CD8-positive, alpha-beta T cell (primary cell): ENCODE measurements at regions of chr10 and their contacts with region 1.

Region 1: DNA sequence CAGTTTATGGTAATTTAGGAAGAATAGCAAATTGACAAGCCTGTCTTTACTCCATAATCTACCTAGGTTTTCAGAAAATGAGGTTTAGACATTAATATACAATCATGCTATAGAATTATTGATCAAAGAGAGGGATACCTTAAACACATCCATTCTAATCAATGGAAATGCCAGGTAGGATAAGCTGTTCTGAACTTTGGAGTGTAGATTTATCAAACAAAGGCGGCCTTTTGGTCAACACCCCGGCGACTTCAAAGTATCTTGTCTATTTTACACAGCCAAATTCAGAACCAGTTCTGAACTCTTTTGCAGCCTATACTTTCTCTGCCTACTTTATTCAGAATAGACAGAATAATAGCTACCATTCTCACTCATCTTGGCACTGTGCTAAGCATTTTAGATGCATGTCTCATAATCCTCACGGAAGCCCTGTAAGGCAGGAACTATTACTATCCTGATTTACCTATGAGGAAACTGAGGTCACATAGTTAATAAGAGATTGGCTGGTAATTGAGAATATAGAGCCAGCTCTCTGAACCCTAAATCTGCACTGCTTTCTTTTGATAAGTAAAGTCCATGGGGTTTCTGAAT is 641.9 kb upstream of the LRRTM3 start:
- DNase-seq: no peak
- ATAC-seq: no peak
- H3K4me3 ChIP-seq: no peak overlapping the region
- H3K4me3 Mint-ChIP-seq: no peak overlapping the region
- H3K27ac ChIP-seq: no peak overlapping the region
- H3K27ac Mint-ChIP-seq: no peak overlapping the region
- H3K4me1 ChIP-seq: no peaks in the 10 kb centered on the region
- H3K4me1 Mint-ChIP-seq: no peaks in the 10 kb centered on the region
- H3K27me3 ChIP-seq: no peaks in the 10 kb centered on the region
- H3K27me3 Mint-ChIP-seq: no peaks in the 10 kb centered on the region
- CTCF ChIP-seq: no peak

Region 2: DNA sequence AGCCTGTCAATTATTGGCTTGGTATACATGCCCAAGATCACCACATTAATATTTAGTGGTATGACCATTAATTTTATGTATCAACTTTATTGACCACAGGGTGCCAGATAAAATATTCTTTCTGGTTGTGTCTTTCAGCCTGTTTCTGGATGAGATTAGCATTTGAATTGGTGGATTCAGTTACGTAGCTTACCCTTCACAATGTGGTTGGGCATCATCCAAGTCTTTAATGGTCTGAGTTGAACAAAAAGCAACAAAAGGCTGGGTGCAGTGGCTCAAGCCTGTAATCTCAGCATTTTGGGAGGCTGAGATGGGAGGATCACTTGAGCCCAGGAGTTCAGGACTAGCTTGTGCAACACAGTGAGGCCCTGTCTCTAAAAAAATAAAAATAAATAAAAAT is 60.3 kb before region 1 on chr10:
- CTCF ChIA-PET with region 1: no interaction called
- POLR2A ChIA-PET with region 1: no interaction called
- intact Hi-C with region 1: loop called in 1 of 2 experiments (anchors 10 kb)
- DNase-seq: no peak
- ATAC-seq: no peak
- H3K4me3 ChIP-seq: no peak overlapping the region
- H3K4me3 Mint-ChIP-seq: no peak overlapping the region
- H3K27ac ChIP-seq: no peak overlapping the region
- H3K27ac Mint-ChIP-seq: no peak overlapping the region
- H3K4me1 ChIP-seq: no peaks in the 10 kb centered on the region
- H3K4me1 Mint-ChIP-seq: no peaks in the 10 kb centered on the region
- H3K27me3 ChIP-seq: no peaks in the 10 kb centered on the region
- H3K27me3 Mint-ChIP-seq: no peaks in the 10 kb centered on the region
- CTCF ChIP-seq: no peak